Esophagus muscularis mucosa (tissue), 4 donors: ENCODE measurements at regions of chr16 and their contacts with region 1.

Region 1: DNA sequence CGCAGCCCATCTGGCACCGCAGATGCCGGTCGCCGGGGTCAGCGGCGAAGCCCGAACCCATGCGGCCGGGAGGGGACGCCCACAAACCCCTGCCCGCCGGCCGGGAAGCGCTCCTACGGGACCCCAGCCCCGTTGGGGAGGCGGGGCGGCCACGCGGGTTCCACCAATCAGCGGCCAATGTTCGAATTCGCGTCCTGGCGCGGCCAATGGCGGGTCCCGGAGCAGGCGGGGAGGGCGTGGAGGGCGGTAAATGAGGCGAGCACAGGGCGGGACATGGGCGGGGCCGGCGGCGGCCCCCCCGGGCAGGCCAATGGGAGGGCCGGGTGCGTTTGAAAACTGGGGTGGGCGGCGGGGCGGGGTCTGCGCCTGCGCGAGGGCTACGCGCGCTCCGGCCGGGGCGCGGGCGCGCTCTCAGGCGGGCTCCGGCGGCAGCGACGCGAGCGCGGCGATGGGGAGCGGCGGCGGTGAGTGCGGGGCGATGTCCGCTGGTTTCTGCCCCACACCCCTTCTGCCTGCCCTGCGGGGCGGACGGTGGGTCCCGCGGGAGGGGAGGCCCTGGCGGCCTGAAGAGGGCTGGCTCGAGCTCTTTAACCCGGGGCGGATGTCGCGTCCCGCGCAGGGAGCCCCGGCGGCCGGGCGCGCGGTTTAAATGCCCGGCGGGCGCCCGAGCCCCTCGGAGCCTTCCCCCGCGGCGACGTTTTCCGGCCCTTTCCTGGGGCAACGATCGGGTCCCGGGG is at the start of gene CCNF:
- DNase-seq: peak; percentile 99
- H3K4me3 ChIP-seq: peak within 1 kb of the TSS; percentile 64 to 96 (median 74)
- H3K27ac ChIP-seq: peak within 1 kb of the TSS; percentile 72 to 88 (median 78)
- H3K4me1 ChIP-seq: peaks cover 15 to 21% (median 19%) of the 10 kb centered on the region in 4 donors
- H3K27me3 ChIP-seq: no peaks in the 10 kb centered on the region
- CTCF ChIP-seq: peak in 1 of 3 experiments; percentile 50
- EP300 ChIP-seq: no peak
- POLR2A ChIP-seq: peak; percentile 47
- total RNA-seq, gene CCNF: 0.83 to 2.5 (median 1.5) TPM

Region 2: DNA sequence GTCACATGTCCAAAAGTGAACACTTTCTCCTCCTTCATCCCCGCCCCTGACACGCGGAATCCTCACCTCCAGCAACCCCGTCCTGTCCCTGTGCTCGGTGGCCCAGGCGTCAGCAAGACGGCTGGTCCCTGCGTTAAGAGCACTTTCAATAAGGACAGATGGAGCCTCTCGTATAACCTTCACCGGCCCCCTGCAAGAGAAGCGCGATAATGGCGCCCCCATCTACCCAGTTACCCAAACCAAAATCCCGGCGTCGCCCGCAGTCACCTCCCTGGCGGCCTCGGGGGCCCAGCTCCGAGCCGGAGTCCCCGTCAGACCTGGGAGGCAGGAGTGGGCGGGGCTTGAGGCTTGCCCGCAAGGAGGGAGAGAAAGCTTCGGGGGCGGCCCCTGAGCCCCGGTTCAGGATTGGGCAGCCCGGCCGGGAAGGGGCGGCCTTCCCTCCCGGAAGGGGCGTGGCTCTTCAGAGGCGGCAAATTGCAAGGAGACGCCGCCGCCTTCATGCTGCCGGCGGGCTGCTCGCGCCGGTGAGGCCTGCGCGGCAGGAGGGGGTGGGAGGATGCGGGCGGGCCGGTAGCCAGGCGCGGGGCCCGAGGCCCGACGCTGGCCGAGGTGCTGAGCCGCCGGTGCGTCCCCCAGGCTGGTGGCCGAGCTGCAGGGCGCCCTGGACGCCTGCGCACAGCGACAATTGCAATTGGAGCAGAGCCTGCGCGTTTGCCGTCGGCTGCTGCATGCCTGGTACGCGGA is 30.6 kb after region 1 on chr16 and contains the start of gene TEDC2:
- intact Hi-C with region 1: loop called (anchors 2 kb)
- DNase-seq: peak; percentile 98
- H3K4me3 ChIP-seq: peak within 1 kb of the TSS; percentile 53 to 64 (median 59)
- H3K27ac ChIP-seq: peak within 1 kb of the TSS; percentile 45 to 57 (median 55)
- H3K4me1 ChIP-seq: peaks cover 15 to 20% (median 17%) of the 10 kb centered on the region in 4 donors
- H3K27me3 ChIP-seq: no peaks in the 10 kb centered on the region
- CTCF ChIP-seq: no peak
- EP300 ChIP-seq: no peak
- POLR2A ChIP-seq: no peak
- total RNA-seq, gene TEDC2: 1.5 TPM in 1 of 4 donors, not detected in the others